GM12878 (cell line): ENCODE measurements at regions of chr6 and their contacts with region 1.

Region 1: GRCh38 chr6:25369433-25370181 is 90.4 kb downstream of the CARMIL1 start:
- DNase-seq: no peak
- ATAC-seq: peak; percentile 39
- H3K4me3 ChIP-seq: peak overlapping the region; percentile 25; the same call in 1 of the 2 replicates
- H3K27ac ChIP-seq: peak overlapping the region; percentile 56
- H3K4me1 ChIP-seq: peaks cover 26% of the 10 kb centered on the region
- H3K27me3 ChIP-seq: no peaks in the 10 kb centered on the region
- CTCF ChIP-seq: no peak
- EP300 ChIP-seq: no peak
- POLR2A ChIP-seq: no peak
- RAD21 ChIP-seq: no peak

Region 2: DNA sequence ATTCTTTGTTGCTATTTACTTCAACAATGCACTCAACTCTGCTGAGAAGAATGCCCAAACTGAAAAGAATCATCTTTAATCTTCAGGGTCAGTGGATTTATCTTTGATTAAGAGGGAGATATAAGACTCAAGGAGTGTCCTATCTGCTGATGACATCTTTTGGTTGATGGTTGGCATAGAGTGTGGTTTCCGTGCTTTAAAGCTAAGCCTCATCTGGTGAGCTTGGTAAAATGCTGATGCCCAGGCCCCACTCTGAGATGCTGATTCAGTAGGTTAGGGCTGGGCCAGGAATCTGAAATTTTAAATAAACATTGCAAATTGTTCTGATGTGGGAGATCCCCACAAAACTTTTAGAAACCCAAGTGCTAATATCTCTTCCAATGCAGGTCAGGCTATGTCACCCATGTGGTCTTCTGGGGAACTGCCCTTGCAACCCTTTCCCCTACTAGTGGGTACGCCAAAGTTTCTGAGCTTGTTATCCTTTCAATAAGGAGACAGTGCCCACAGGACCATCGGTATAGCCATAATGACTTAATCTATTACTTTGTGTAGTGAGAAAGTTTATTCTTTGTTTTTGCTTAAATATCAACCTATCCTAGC is 502.4 kb before region 1 on chr6:
- CTCF ChIA-PET with region 1: no interaction called
- POLR2A ChIA-PET with region 1: no interaction called
- RAD21 ChIA-PET with region 1: no interaction called
- SMC1A ChIA-PET with region 1: no interaction called
- in situ Hi-C with region 1: no loop called
- intact Hi-C with region 1: no loop called
- DNase-seq: no peak
- ATAC-seq: no peak
- H3K4me3 ChIP-seq: no peak overlapping the region
- H3K27ac ChIP-seq: no peak overlapping the region
- H3K4me1 ChIP-seq: peaks cover 3% of the 10 kb centered on the region
- H3K27me3 ChIP-seq: no peaks in the 10 kb centered on the region
- CTCF ChIP-seq: peak in 1 of 3 experiments; percentile 8; a peak in 1 of 6 replicates
- EP300 ChIP-seq: no peak
- POLR2A ChIP-seq: no peak
- RAD21 ChIP-seq: no peak

Region 3: DNA sequence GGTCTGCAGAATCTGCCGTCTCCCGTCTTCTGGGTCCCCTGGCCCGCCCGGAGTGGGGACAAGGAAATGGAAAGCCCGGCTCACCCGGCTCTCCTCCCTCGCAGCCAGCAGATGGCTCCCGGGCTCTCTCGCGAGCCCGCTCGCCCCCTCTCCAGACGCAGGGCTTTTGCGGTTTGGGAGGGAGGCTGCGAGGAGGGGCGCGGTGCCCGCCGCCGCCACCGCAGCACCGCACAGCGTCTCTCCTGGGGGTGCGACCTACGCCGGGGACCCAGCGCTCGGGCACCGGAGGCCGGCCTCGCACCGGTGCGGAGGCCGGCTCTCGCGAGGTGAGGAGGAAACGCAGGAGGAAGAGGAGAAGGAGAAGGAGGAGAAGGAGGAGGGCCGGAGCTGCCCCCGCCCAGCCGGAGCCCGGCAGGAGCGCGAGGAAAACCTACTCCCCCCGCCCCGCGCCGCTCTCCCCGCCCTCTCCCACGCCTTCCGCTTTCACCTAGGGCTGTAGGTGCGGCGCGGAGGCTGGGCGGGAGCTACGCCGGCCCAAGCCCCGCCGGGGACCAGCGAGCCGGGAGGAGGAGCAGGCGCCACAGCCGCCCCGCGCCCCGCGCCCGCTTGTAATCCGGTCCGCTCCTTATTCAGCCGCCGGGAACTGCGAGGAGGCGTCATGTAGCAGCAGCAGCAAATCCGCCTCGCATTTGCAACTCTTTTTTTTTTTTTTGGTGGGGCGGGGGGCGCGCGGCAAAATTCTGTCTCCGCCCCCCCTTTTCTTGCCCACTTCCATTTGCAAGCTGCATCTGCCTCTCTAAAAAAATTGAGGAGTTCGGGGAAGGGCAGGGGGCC is 90.5 kb before region 1 on chr6 and contains the start of gene CARMIL1:
- CTCF ChIA-PET with region 1: interaction called, 39 read pairs
- POLR2A ChIA-PET with region 1: interaction called, 12 read pairs
- RAD21 ChIA-PET with region 1: interaction called, 56 read pairs
- SMC1A ChIA-PET with region 1: interaction called, 29 read pairs
- in situ Hi-C with region 1: no loop called
- intact Hi-C with region 1: no loop called
- DNase-seq: no peak
- ATAC-seq: peak; percentile 88
- H3K4me3 ChIP-seq: peak within 1 kb of the TSS; percentile 92
- H3K27ac ChIP-seq: peak within 1 kb of the TSS; percentile 50
- H3K4me1 ChIP-seq: 0 out of 2 replicates have a peak, but pooled peaks cover 5% of the 10 kb centered on the region
- H3K27me3 ChIP-seq: no peaks in the 10 kb centered on the region
- CTCF ChIP-seq: peak; percentile 64 to 81 (median 75)
- EP300 ChIP-seq: no peak
- POLR2A ChIP-seq: no peak
- RAD21 ChIP-seq: peak; percentile 79
- polyA plus RNA-seq, gene CARMIL1: 9.4 to 11.3 TPM

Region 4: GRCh38 chr6:25342802-25343201 is 26.8 kb before region 1 on chr6:
- CTCF ChIA-PET with region 1: interaction called, 12 read pairs
- POLR2A ChIA-PET with region 1: interaction called, 7 read pairs
- RAD21 ChIA-PET with region 1: interaction called, 8 read pairs
- SMC1A ChIA-PET with region 1: interaction called, 17 read pairs
- in situ Hi-C with region 1: no loop called
- intact Hi-C with region 1: no loop called
- DNase-seq: no peak
- ATAC-seq: no peak
- H3K4me3 ChIP-seq: no peak overlapping the region
- H3K27ac ChIP-seq: no peak overlapping the region
- H3K4me1 ChIP-seq: peaks cover 9% of the 10 kb centered on the region
- H3K27me3 ChIP-seq: 0 out of 4 replicates have a peak, but pooled peaks cover 0 to 2% of the 10 kb centered on the region in 2 experiments
- CTCF ChIP-seq: no peak
- EP300 ChIP-seq: no peak
- POLR2A ChIP-seq: no peak
- RAD21 ChIP-seq: no peak

Region 5: DNA sequence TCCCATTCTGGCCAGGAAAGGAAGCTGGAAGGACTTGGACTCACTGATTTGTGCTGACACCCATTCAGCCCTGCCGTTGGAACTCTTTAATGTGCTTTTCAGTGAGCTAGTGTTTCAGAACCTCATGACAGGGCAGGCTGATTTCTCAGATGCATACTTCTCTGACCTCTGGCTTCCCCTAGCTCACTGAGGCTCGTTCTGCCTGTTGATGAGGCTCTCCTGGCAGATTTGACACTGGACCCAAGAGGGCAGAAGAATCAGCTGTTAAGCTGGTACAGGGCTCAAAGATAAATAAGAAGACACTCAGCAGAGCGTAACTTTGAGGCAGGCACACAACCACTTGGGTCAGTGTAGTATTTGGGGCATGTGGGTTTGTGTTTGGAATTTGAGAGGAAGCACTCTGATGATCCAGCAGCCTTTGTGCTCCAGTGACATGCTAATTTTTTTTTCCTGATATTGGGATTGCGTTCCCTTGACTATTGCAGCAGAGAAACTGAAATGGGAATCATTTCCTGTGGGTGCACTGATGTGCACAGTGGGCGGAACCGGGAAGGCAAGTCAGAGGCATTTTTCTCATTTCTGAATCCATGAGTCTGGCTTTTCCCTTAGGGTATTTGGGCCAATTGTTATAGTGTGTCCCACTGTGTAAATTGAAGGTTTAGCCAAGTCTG is 10.3 kb before region 1 on chr6:
- CTCF ChIA-PET with region 1: interaction called, 10 read pairs
- POLR2A ChIA-PET with region 1: interaction called, 10 read pairs
- RAD21 ChIA-PET with region 1: interaction called, 11 read pairs
- SMC1A ChIA-PET with region 1: interaction called, 35 read pairs
- in situ Hi-C with region 1: no loop called
- intact Hi-C with region 1: no loop called
- DNase-seq: no peak
- ATAC-seq: no peak; the same call in 2 of the 3 replicates
- H3K4me3 ChIP-seq: no peak overlapping the region
- H3K27ac ChIP-seq: no peak overlapping the region
- H3K4me1 ChIP-seq: no peaks in the 10 kb centered on the region
- H3K27me3 ChIP-seq: no peaks in the 10 kb centered on the region
- CTCF ChIP-seq: no peak
- EP300 ChIP-seq: no peak
- POLR2A ChIP-seq: no peak
- RAD21 ChIP-seq: no peak

Region 6: GRCh38 chr6:25404693-25405169 is 35.1 kb after region 1 on chr6:
- CTCF ChIA-PET with region 1: interaction called, 9 read pairs
- POLR2A ChIA-PET with region 1: interaction called, 22 read pairs
- RAD21 ChIA-PET with region 1: interaction called, 42 read pairs
- SMC1A ChIA-PET with region 1: interaction called, 63 read pairs
- in situ Hi-C with region 1: no loop called
- intact Hi-C with region 1: no loop called
- DNase-seq: peak; percentile 90
- ATAC-seq: peak; percentile 95
- H3K4me3 ChIP-seq: peak overlapping the region; percentile 46; the same call in 1 of the 2 replicates
- H3K27ac ChIP-seq: peak overlapping the region; percentile 76
- H3K4me1 ChIP-seq: peaks cover 27% of the 10 kb centered on the region
- H3K27me3 ChIP-seq: no peaks in the 10 kb centered on the region
- CTCF ChIP-seq: no peak
- EP300 ChIP-seq: peak; percentile 76 to 86; a peak in 3 of 4 replicates
- POLR2A ChIP-seq: 0 out of 2 replicates have a peak, but pooled peaks have one; percentile 42
- RAD21 ChIP-seq: no peak